GM12878 (cell line): ENCODE measurements at regions of chr18 and their contacts with region 1.

Region 1: GRCh38 chr18:44887227-44887631 is 206.5 kb downstream of the SETBP1 start:
- DNase-seq: peak; percentile 69
- ATAC-seq: peak; percentile 95
- H3K4me3 ChIP-seq: no peak overlapping the region
- H3K27ac ChIP-seq: peak overlapping the region; percentile 36
- H3K4me1 ChIP-seq: peaks cover 14% of the 10 kb centered on the region
- H3K27me3 ChIP-seq: no peaks in the 10 kb centered on the region
- CTCF ChIP-seq: no peak
- EP300 ChIP-seq: 0 out of 4 replicates have a peak, but pooled peaks of 1 of the 2 experiments have one; percentile 44
- POLR2A ChIP-seq: no peak
- RAD21 ChIP-seq: no peak

Region 2: DNA sequence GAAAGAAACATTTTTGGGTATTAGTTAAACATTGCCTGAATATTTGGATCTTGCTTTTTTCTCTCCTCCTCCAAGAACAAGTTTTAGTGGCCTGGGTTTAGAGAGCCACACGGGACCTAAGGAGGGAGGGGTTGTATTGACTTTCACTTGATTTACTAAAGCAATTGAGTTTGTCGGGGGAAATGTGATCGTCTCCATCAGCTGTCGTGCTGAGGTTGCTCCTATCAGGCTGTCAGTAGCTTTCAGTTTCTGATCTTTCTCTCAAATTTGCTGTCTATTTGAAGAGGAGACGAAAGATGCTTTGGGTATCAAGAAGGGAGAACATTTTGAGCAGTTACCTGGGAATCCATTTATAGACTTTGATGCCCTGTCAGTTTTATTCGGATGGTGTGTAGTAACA is 100.5 kb before region 1 on chr18:
- CTCF ChIA-PET with region 1: no interaction called
- POLR2A ChIA-PET with region 1: no interaction called
- RAD21 ChIA-PET with region 1: interaction called, 4 read pairs
- SMC1A ChIA-PET with region 1: interaction called, 14 read pairs
- in situ Hi-C with region 1: no loop called
- intact Hi-C with region 1: no loop called
- DNase-seq: no peak
- ATAC-seq: peak; percentile 85
- H3K4me3 ChIP-seq: peak overlapping the region; percentile 41; the same call in 1 of the 2 replicates
- H3K27ac ChIP-seq: peak overlapping the region; percentile 64
- H3K4me1 ChIP-seq: peaks cover 20% of the 10 kb centered on the region
- H3K27me3 ChIP-seq: no peaks in the 10 kb centered on the region
- CTCF ChIP-seq: no peak
- EP300 ChIP-seq: no peak
- POLR2A ChIP-seq: no peak
- RAD21 ChIP-seq: no peak

Region 3: DNA sequence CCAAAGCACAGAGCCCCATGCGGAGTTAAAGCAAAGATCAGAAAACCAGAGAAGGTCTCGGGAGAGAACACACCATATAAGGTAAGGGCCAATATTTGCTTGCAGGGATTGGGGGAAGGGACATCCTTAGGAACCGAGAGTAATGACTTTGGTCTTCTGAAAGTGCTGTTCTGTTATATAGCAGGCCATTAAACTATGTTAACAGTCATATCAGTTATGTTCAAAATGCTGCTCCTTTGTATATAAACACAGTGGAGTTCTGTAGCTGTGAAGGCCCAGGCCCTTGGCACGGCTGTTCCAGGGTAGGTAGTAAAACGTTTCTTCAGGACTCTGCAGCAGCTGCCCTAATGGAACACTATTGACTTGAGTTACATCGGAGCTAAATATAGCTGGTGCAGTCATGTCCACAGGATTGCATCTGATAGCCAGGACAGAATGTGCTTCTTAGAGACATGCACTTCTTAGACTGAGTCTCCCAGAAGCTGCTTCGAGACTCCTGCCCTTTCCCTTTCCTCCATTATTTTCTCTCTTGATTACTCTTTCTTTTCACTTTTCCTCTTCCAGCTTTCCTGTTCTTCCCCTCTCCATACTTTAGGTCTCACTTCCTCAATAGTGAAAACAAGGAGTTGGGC is 84.1 kb before region 1 on chr18:
- CTCF ChIA-PET with region 1: interaction called, 4 read pairs
- POLR2A ChIA-PET with region 1: interaction called, 3 read pairs
- RAD21 ChIA-PET with region 1: interaction called, 16 read pairs
- SMC1A ChIA-PET with region 1: interaction called, 14 read pairs
- in situ Hi-C with region 1: no loop called
- intact Hi-C with region 1: loop called (anchors 5 kb)
- DNase-seq: no peak
- ATAC-seq: peak; percentile 52
- H3K4me3 ChIP-seq: 0 out of 2 replicates have a peak overlapping the region, but pooled peaks have one; percentile 12
- H3K27ac ChIP-seq: no peak overlapping the region
- H3K4me1 ChIP-seq: peaks cover 43% of the 10 kb centered on the region
- H3K27me3 ChIP-seq: no peaks in the 10 kb centered on the region
- CTCF ChIP-seq: no peak
- EP300 ChIP-seq: no peak
- POLR2A ChIP-seq: no peak
- RAD21 ChIP-seq: no peak

Region 4: GRCh38 chr18:44870631-44871502 is 16.4 kb before region 1 on chr18:
- CTCF ChIA-PET with region 1: interaction called, 6 read pairs
- POLR2A ChIA-PET with region 1: interaction called, 4 read pairs
- RAD21 ChIA-PET with region 1: interaction called, 9 read pairs
- SMC1A ChIA-PET with region 1: interaction called, 18 read pairs
- in situ Hi-C with region 1: no loop called
- intact Hi-C with region 1: no loop called
- DNase-seq: no peak
- ATAC-seq: peak; percentile 82
- H3K4me3 ChIP-seq: no peak overlapping the region
- H3K27ac ChIP-seq: no peak overlapping the region
- H3K4me1 ChIP-seq: peaks cover 12% of the 10 kb centered on the region
- H3K27me3 ChIP-seq: no peaks in the 10 kb centered on the region
- CTCF ChIP-seq: peak in 1 of 3 experiments; percentile 13; a peak in 1 of 6 replicates
- EP300 ChIP-seq: 0 out of 4 replicates have a peak, but pooled peaks of 1 of the 2 experiments have one; percentile 5
- POLR2A ChIP-seq: no peak
- RAD21 ChIP-seq: peak; percentile 29; the same call in 1 of the 2 replicates

Region 5: GRCh38 chr18:44909191-44909719 is 22.0 kb after region 1 on chr18:
- CTCF ChIA-PET with region 1: interaction called, 20 read pairs
- POLR2A ChIA-PET with region 1: interaction called, 6 read pairs
- RAD21 ChIA-PET with region 1: interaction called, 20 read pairs
- SMC1A ChIA-PET with region 1: interaction called, 48 read pairs
- in situ Hi-C with region 1: no loop called
- intact Hi-C with region 1: no loop called
- DNase-seq: peak; percentile 68
- ATAC-seq: peak; percentile 85
- H3K4me3 ChIP-seq: peak overlapping the region; percentile 29; the same call in 1 of the 2 replicates
- H3K27ac ChIP-seq: 0 out of 2 replicates have a peak overlapping the region, but pooled peaks have one; percentile 13
- H3K4me1 ChIP-seq: peaks cover 45% of the 10 kb centered on the region
- H3K27me3 ChIP-seq: no peaks in the 10 kb centered on the region
- CTCF ChIP-seq: no peak
- EP300 ChIP-seq: peak in 1 of 2 experiments; percentile 53; a peak in 2 of 4 replicates
- POLR2A ChIP-seq: no peak
- RAD21 ChIP-seq: 0 out of 2 replicates have a peak, but pooled peaks have one; percentile 11